ENCODE measurements at regions of chr16 and their contacts with region 1.

Region 1: GRCh38 chr16:17070882-17071592 is 399.7 kb downstream of the XYLT1 start:
- DNase-seq: peak; percentile 84
- H3K4me3 Mint-ChIP-seq: peak overlapping the region; percentile 53
- H3K27ac Mint-ChIP-seq: peak overlapping the region; percentile 44
- H3K4me1 Mint-ChIP-seq: peaks cover 23% of the 10 kb centered on the region
- H3K27me3 Mint-ChIP-seq: no peaks in the 10 kb centered on the region

Region 2: GRCh38 chr16:16861546-16861945 is 209.5 kb before region 1 on chr16:
- CTCF ChIA-PET with region 1: no interaction called
- POLR2A ChIA-PET with region 1: no interaction called
- intact Hi-C with region 1: loop called (anchors 5 kb)
- DNase-seq: peak; percentile 48
- H3K4me3 Mint-ChIP-seq: no peak overlapping the region
- H3K27ac Mint-ChIP-seq: no peak overlapping the region
- H3K4me1 Mint-ChIP-seq: no peaks in the 10 kb centered on the region
- H3K27me3 Mint-ChIP-seq: peaks cover 5% of the 10 kb centered on the region

Region 3: GRCh38 chr16:17013038-17013437 is 58.0 kb before region 1 on chr16:
- CTCF ChIA-PET with region 1: no interaction called
- POLR2A ChIA-PET with region 1: no interaction called
- intact Hi-C with region 1: loop called (anchors 5 kb)
- DNase-seq: no peak
- H3K4me3 Mint-ChIP-seq: peak overlapping the region; percentile 69
- H3K27ac Mint-ChIP-seq: no peak overlapping the region
- H3K4me1 Mint-ChIP-seq: peaks cover 12% of the 10 kb centered on the region
- H3K27me3 Mint-ChIP-seq: no peaks in the 10 kb centered on the region

Region 4: GRCh38 chr16:17026600-17027242 is 44.3 kb before region 1 on chr16:
- CTCF ChIA-PET with region 1: no interaction called
- POLR2A ChIA-PET with region 1: no interaction called
- intact Hi-C with region 1: loop called (anchors 2 kb)
- DNase-seq: peak; percentile 65
- H3K4me3 Mint-ChIP-seq: no peak overlapping the region
- H3K27ac Mint-ChIP-seq: peak overlapping the region; percentile 60
- H3K4me1 Mint-ChIP-seq: peaks cover 24% of the 10 kb centered on the region
- H3K27me3 Mint-ChIP-seq: no peaks in the 10 kb centered on the region

Measured in activated CD4-positive, alpha-beta memory T cell treated with anti-CD3 and anti-CD28 coated beads for 36 hours (primary cell).